ENCODE measurements at regions of chr2 and their contacts with region 1.

Region 1: GRCh38 chr2:23617167-23617810 is 232.3 kb downstream of the KLHL29 start:
- DNase-seq: peak in 1 of 2 donors; percentile 93
- H3K4me3 ChIP-seq: peak overlapping the region in 1 of 2 donors; percentile 18
- H3K27ac ChIP-seq: peak overlapping the region; percentile 92
- H3K4me1 ChIP-seq: peaks cover 43% of the 10 kb centered on the region
- H3K27me3 ChIP-seq: no peaks in the 10 kb centered on the region
- CTCF ChIP-seq: peak in 1 of 3 experiments; percentile 49
- POLR2A ChIP-seq: no peak

Region 2: DNA sequence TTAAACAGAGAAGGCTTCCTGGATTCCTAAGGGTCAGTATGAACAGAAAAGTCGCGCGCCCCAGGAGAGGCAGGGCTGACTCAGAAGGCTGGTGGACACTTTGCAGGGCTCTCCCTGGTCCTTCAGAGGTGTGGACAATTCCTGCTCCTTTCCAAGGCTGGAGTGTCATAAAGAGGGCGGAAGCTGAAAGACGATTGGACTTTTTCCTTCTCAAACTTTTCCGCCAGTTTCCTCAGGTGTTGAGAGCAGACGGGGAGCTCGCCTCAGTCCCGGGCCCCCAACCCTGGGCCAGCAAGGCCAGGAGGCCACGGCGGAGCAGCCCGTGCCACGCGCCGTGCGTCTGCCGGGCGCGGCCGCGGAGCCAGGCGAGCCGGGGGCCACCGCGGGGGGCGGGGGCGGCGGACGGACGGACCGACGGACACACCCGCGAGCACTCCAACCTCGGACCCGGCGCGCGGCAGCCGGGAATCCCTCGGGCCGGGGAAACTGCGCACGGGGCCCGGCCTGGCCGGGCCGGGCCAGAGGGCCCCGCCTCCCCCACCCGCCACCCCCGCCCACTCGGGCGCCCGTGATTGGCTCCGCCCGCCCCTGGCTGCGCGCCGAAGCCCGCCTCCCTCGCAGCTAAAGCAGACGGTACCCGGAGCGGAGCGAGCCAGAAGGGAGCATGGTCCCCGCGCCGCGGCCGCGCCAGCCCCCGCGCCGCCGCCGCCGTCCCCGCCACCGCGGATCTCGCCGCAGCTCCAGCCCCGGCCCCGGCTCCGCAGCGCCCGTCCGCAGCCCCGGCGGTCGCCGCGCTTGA is 232.5 kb before region 1 on chr2 and contains the start of gene KLHL29:
- intact Hi-C with region 1: loop called (anchors 5 kb)
- DNase-seq: peak; percentile 67 to 85
- H3K4me3 ChIP-seq: peak within 1 kb of the TSS; percentile 77 to 94
- H3K27ac ChIP-seq: peak within 1 kb of the TSS; percentile 70
- H3K4me1 ChIP-seq: peaks cover 26% of the 10 kb centered on the region
- H3K27me3 ChIP-seq: no peaks in the 10 kb centered on the region
- CTCF ChIP-seq: no peak
- POLR2A ChIP-seq: peak in 1 of 2 donors; percentile 73
- total RNA-seq, gene KLHL29: 19.4 TPM

Region 3: DNA sequence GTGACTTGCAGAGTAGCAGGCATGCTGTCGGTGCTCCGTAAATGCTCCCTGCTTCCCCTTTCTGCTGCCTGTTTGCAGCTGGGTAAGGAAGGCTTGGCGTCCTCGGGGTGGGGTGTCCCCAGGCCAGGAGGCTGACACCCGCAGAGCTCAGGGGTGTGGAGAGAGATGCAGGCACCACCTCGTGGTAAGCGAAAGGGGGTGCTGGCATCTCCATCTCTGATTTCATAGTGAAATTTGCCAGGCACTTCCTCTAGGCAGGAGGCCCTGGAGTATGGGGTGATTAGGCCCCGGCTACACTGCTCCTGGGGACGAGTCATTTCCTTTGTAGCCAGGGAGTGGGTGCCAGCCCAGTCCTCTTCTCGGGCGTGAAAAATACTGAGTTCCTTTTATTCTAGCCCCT is 71.9 kb before region 1 on chr2:
- intact Hi-C with region 1: no loop called
- DNase-seq: no peak
- H3K4me3 ChIP-seq: no peak overlapping the region
- H3K27ac ChIP-seq: no peak overlapping the region
- H3K4me1 ChIP-seq: peaks cover 37% of the 10 kb centered on the region
- H3K27me3 ChIP-seq: no peaks in the 10 kb centered on the region
- CTCF ChIP-seq: no peak
- POLR2A ChIP-seq: no peak

Measured in vagina (tissue), 2 donors.